Naive thymus-derived CD4-positive, alpha-beta T cell (primary cell): ENCODE measurements at regions of chr2 and their contacts with region 1.

Region 1: GRCh38 chr2:96305091-96305978 is at the start of gene SNRNP200:
- DNase-seq: peak; percentile 77 to 92 (median 90)
- ATAC-seq: peak; percentile 96
- H3K4me3 ChIP-seq: peak within 1 kb of the TSS; percentile 85
- H3K4me3 Mint-ChIP-seq: peak within 1 kb of the TSS; percentile 94 to 100 (median 99)
- H3K27ac ChIP-seq: peak within 1 kb of the TSS; percentile 94
- H3K27ac Mint-ChIP-seq: peak within 1 kb of the TSS; percentile 97 to 100 (median 99)
- H3K4me1 ChIP-seq: peaks cover 30 to 41% of the 10 kb centered on the region in 2 donors
- H3K4me1 Mint-ChIP-seq: peaks cover 41 to 61% (median 58%) of the 10 kb centered on the region in 7 donors
- H3K27me3 ChIP-seq: no peaks in the 10 kb centered on the region
- H3K27me3 Mint-ChIP-seq: no peaks in the 10 kb centered on the region
- total RNA-seq, gene SNRNP200: 165 to 255 (median 212) TPM

Region 2: GRCh38 chr2:96024336-96025193 is 280.8 kb before region 1 on chr2:
- CTCF ChIA-PET with region 1: no interaction called
- POLR2A ChIA-PET with region 1: no interaction called
- intact Hi-C with region 1: no loop called
- DNase-seq: no peak
- ATAC-seq: no peak
- H3K4me3 ChIP-seq: no peak overlapping the region
- H3K4me3 Mint-ChIP-seq: no peak overlapping the region
- H3K27ac ChIP-seq: no peak overlapping the region
- H3K27ac Mint-ChIP-seq: no peak overlapping the region
- H3K4me1 ChIP-seq: no peaks in the 10 kb centered on the region
- H3K4me1 Mint-ChIP-seq: peaks cover 0 to 3% (median 0%) of the 10 kb centered on the region in 7 donors
- H3K27me3 ChIP-seq: no peaks in the 10 kb centered on the region
- H3K27me3 Mint-ChIP-seq: no peaks in the 10 kb centered on the region

Region 3: DNA sequence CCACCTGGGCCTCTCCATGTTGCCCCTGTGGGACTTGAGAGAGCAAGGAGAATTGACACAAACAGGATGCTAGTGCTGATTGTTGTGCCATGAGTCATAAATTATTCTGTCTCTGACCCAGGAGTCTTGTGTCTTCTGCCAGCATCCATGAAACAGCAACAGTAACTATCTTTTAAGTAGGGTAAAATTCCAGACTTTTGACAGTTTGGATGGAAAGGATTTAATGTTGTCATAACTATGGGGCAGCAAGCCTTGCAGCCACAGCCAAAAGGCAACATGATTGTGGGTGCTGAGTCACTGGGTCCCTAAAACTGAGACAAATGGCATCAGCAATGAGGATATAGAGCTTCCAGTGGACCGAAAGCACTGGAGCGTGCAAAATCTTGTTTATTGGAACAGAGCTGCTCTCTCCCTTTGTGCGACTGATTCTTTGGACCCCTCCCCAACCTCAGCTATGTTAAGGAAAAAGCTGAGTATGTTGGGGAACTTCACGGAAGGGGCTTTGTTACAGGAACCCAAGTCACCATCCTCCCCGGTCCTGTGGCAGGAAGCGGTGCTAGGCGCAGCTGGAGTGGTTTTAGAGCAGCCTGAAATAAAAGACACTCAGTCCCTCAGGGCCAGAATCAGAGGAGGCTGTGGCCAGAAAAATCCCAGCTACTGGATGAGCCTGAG is 10.2 kb after region 1 on chr2:
- CTCF ChIA-PET with region 1: interaction called, 3 read pairs
- POLR2A ChIA-PET with region 1: interaction called, 14 read pairs
- intact Hi-C with region 1: loop called in 1 of 2 experiments (anchors 1 kb)
- DNase-seq: peak in 1 of 9 donors; percentile 34
- ATAC-seq: peak; percentile 60
- H3K4me3 ChIP-seq: no peak overlapping the region
- H3K4me3 Mint-ChIP-seq: peak overlapping the region in 4 of 10 donors; percentile 17 to 82 (median 26)
- H3K27ac ChIP-seq: no peak overlapping the region
- H3K27ac Mint-ChIP-seq: peak overlapping the region in 3 of 9 donors; percentile 8 to 91 (median 61)
- H3K4me1 ChIP-seq: peaks cover 11 to 36% of the 10 kb centered on the region in 2 donors
- H3K4me1 Mint-ChIP-seq: peaks cover 0 to 65% (median 19%) of the 10 kb centered on the region in 7 donors
- H3K27me3 ChIP-seq: no peaks in the 10 kb centered on the region
- H3K27me3 Mint-ChIP-seq: no peaks in the 10 kb centered on the region

Region 4: DNA sequence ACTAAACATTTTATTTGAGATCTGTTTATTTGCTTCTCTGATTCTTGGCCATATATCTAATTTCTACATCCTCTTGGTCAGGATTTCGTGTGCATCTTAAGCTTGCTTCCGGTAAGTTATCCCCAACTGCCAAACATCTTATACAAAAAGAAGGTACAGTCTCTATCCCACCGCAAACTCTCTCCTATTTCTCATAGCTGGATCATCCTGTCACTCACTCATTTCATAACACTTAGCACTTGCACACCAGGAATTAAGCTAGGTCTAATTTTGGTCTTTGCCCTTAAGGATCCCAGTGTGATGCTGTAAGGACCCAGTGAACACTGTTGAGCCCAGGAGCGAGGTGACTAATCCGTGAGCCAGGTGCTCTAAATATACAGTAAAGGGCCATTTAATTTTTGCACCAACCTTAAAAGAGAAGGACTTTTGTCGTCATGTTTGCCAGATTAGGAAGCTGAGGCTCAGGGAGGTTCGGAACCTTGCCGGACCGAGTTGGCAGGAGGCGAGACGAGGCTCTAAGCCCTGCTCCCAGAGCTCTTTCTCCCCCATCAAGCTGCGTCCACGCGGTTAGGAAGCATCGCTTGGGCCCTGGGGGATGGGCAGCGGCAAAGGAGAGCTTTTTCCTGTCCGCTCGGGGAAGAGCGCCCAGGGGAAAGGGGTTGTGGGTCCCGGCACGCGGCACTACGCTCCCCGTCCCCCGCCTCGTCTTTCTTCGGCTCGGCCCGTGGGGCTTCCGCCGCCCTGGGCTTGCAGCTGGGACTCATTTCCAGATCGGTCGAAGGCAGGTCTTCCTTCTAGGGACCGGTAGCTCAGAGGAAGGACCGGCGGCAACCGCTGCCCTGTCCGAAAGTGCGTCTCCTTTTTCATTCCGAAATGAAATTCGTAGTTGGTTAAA is 15.6 kb after region 1 on chr2:
- CTCF ChIA-PET with region 1: interaction called, 5 read pairs
- POLR2A ChIA-PET with region 1: interaction called, 16 read pairs
- intact Hi-C with region 1: loop called (anchors 1 kb)
- DNase-seq: peak in 3 of 9 donors; percentile 13 to 62 (median 19)
- ATAC-seq: peak; percentile 28
- H3K4me3 ChIP-seq: peak overlapping the region; percentile 82
- H3K4me3 Mint-ChIP-seq: peak overlapping the region; percentile 86 to 95 (median 91)
- H3K27ac ChIP-seq: peak overlapping the region; percentile 53
- H3K27ac Mint-ChIP-seq: peak overlapping the region in 7 of 9 donors; percentile 6 to 89 (median 62)
- H3K4me1 ChIP-seq: peaks cover 21 to 42% of the 10 kb centered on the region in 2 donors
- H3K4me1 Mint-ChIP-seq: peaks cover 7 to 67% (median 33%) of the 10 kb centered on the region in 7 donors
- H3K27me3 ChIP-seq: no peaks in the 10 kb centered on the region
- H3K27me3 Mint-ChIP-seq: peaks cover 0 to 7% (median 0%) of the 10 kb centered on the region in 5 donors

Region 5: DNA sequence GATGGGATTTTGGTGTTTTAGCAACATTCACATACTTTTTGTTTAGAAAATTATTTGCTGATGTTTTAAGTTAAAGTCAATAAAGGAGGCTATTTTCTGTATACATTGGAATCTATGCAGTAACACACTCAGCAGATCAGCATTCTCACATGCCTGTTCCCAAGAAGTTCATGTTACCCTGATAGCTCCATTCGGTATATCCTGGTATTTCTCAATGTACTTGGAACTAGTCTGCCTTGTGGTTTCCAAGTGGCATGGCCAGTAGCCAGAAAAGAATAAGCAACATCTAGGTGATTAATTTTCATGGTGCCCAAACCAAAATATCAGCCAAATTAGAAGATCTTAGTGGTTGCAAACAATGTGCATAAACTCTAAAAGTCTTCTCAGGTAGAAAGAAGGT is 25.1 kb after region 1 on chr2:
- CTCF ChIA-PET with region 1: interaction called, 3 read pairs
- POLR2A ChIA-PET with region 1: interaction called, 16 read pairs
- intact Hi-C with region 1: loop called (anchors 1 kb)
- DNase-seq: no peak
- ATAC-seq: no peak
- H3K4me3 ChIP-seq: no peak overlapping the region
- H3K4me3 Mint-ChIP-seq: no peak overlapping the region
- H3K27ac ChIP-seq: no peak overlapping the region
- H3K27ac Mint-ChIP-seq: no peak overlapping the region
- H3K4me1 ChIP-seq: peaks cover 17 to 23% of the 10 kb centered on the region in 2 donors
- H3K4me1 Mint-ChIP-seq: peaks cover 23 to 64% (median 34%) of the 10 kb centered on the region in 7 donors
- H3K27me3 ChIP-seq: no peaks in the 10 kb centered on the region
- H3K27me3 Mint-ChIP-seq: no peaks in the 10 kb centered on the region

Region 6: DNA sequence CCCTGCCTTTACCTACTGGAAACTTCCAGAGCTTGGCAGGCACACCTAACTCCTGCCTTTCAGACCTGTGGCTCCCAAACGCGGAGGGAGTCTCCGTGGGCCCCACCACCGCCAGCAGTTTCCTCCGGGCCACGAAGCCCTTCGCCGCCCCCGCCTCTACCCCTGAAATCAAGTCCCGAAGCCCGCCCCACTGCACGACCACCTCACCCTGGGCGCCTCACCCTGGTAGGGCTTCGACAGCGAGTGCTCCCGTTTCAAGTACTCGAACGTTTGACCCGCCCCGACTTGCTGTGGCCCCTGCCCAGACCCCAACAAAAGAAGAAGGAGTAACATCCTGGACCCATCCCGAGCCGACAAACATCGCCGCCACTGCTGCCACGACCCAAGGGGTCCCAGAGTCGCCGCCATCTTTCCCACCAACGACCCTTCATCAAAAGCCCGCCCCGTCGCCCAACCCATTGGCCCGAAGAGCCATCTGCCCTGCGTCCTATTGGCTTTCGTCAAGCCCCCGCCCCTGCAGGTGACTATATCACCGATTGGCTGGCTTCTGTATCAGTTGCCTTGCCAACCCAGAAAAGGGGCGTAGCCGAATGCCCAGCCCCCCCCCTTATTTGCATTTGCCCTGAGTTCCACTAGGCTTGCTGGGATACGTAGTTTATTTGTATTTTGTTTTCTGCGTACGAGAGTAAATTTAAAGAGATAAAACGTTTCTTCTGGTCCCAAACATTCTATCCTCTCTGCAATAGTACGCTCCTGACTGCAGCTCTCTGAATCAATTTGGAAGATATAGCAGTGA is 434.5 kb after region 1 on chr2 and contains the start of gene LMAN2L:
- CTCF ChIA-PET with region 1: no interaction called
- POLR2A ChIA-PET with region 1: no interaction called
- intact Hi-C with region 1: loop called (anchors 1 kb)
- DNase-seq: peak; percentile 78 to 99 (median 94)
- ATAC-seq: peak; percentile 100
- H3K4me3 ChIP-seq: peak within 1 kb of the TSS; percentile 70
- H3K4me3 Mint-ChIP-seq: peak within 1 kb of the TSS; percentile 92 to 100 (median 97)
- H3K27ac ChIP-seq: peak within 1 kb of the TSS; percentile 75
- H3K27ac Mint-ChIP-seq: peak within 1 kb of the TSS; percentile 83 to 96 (median 90)
- H3K4me1 ChIP-seq: peaks cover 6% of the 10 kb centered on the region in 2 donors
- H3K4me1 Mint-ChIP-seq: peaks cover 20 to 48% (median 37%) of the 10 kb centered on the region in 7 donors
- H3K27me3 ChIP-seq: no peaks in the 10 kb centered on the region
- H3K27me3 Mint-ChIP-seq: no peaks in the 10 kb centered on the region
- total RNA-seq, gene LMAN2L: 5.0 to 10.9 (median 9.2) TPM